ENCODE measurements at regions of chr1 and their contacts with region 1.

Region 1: GRCh38 chr1:3992103-3992556 is 92.1 kb upstream of the C1orf174 start:
- DNase-seq: peak; percentile 1
- ATAC-seq: no peak
- H3K4me3 ChIP-seq: no peak overlapping the region
- H3K27ac ChIP-seq: no peak overlapping the region
- H3K4me1 ChIP-seq: no peaks in the 10 kb centered on the region
- H3K27me3 ChIP-seq: no peaks in the 10 kb centered on the region
- CTCF ChIP-seq: no peak
- POLR2A ChIP-seq: no peak
- RAD21 ChIP-seq: no peak

Region 2: DNA sequence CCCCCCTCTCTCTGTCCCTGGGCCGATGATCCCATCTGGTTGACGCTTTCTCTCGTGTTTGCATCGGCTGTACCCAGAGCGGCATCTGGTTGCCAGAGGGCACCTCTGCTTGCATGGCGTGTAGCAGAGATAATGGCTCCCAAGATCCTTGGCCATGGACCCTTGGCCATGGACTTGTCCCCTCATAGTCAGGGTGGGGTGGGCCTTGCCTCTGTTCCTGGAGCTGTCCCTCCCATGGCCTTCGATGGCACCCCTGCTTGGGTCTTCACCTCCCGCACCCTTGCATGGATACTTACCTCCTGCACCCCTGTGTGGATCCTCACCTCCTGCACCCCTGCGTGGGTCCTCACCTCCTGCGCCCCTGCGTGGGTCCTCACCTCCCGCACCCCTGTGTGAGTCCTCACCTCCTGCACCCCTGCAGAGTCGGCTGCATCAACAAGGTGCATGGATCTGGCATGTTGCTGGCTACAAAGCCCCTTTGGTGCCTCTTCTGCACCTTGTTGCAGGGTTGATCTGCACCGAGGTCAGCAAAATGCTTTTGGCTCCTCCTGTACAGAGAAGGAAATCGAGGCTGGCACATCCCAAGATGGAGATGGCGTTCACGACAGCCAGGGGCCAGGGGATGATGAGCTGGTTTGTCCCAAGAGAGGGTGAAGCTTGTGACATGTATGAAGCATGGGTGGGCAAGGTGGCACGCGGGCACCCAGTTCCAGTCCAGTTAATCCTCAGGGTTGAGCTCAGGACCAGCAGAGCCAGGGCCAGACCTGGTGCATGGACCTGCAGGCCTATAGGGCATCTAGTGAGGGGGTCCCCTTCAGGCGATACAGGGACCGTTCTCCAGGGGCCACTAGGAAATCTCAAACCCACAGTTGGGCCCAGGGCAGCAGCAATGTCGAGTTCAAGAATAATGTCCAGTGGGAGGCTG is 46.0 kb before region 1 on chr1:
- CTCF ChIA-PET with region 1: interaction called, 10 read pairs
- POLR2A ChIA-PET with region 1: no interaction called
- dilution Hi-C with region 1: no loop called
- in situ Hi-C with region 1: no loop called
- intact Hi-C with region 1: no loop called
- DNase-seq: no peak
- ATAC-seq: no peak
- H3K4me3 ChIP-seq: no peak overlapping the region
- H3K27ac ChIP-seq: no peak overlapping the region
- H3K4me1 ChIP-seq: no peaks in the 10 kb centered on the region
- H3K27me3 ChIP-seq: no peaks in the 10 kb centered on the region
- CTCF ChIP-seq: no peak
- POLR2A ChIP-seq: no peak
- RAD21 ChIP-seq: no peak

Region 3: GRCh38 chr1:4027492-4028138 is 35.5 kb after region 1 on chr1:
- CTCF ChIA-PET with region 1: no interaction called
- POLR2A ChIA-PET with region 1: no interaction called
- dilution Hi-C with region 1: no loop called
- in situ Hi-C with region 1: no loop called
- intact Hi-C with region 1: no loop called
- DNase-seq: no peak
- ATAC-seq: no peak
- H3K4me3 ChIP-seq: no peak overlapping the region
- H3K27ac ChIP-seq: no peak overlapping the region
- H3K4me1 ChIP-seq: no peaks in the 10 kb centered on the region
- H3K27me3 ChIP-seq: no peaks in the 10 kb centered on the region
- CTCF ChIP-seq: no peak
- POLR2A ChIP-seq: no peak
- RAD21 ChIP-seq: no peak

Measured in IMR-90 (cell line).